ENCODE measurements at regions of chr19 and their contacts with region 1.

Region 1: GRCh38 chr19:40489882-40490230 is 23.1 kb downstream of the SPTBN4 start:
- DNase-seq: no peak
- ATAC-seq: no peak
- H3K4me3 Mint-ChIP-seq: no peak overlapping the region
- H3K27ac Mint-ChIP-seq: no peak overlapping the region
- H3K4me1 Mint-ChIP-seq: peaks cover 5% of the 10 kb centered on the region
- H3K27me3 Mint-ChIP-seq: peaks cover 67% of the 10 kb centered on the region
- CTCF ChIP-seq: no peak

Region 2: DNA sequence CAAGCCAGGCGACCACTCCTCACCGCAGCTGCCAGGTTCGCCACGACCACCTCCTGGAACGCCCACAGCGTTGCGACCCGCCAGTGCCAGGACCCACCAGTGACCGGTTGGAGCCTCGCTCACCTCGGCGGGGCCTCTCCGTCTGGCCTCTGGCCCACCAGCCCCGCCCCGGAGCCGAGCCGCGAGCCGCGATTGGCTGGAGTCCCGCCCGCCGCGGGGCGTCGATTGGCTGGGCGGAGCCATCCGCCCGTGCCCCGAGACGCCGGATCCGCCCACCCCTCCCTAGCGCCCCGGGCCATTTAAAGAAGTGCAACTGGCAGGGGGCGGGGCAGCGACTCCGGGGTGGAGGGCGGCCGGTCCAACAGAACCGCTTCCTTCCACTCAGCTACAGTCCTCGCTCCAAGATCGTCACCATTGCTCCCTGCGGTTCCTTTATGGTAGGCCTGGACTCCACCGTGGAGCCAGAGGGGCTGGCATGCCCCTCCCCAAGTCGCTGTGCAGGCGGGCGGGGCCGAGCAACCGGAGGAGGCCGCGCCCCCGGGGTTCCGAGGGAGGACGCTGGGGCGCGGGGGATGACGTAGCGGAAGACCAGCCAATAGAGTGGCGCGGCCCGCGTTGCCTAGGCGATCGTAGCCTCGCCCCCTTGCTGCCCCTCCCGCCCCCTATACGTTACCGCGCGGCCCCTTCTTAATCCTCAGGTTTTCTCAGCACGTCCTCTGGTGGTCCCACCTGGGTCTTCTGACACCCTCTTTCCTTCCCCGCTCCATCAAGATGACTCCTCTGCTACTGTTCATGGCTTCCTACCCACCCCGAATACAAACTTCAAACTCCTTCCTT is 45.4 kb before region 1 on chr19 and contains the start of gene SERTAD3:
- CTCF ChIA-PET with region 1: interaction called, 12 read pairs
- POLR2A ChIA-PET with region 1: interaction called, 6 read pairs
- DNase-seq: peak; percentile 97
- ATAC-seq: peak; percentile 68
- H3K4me3 Mint-ChIP-seq: peak within 1 kb of the TSS; percentile 94
- H3K27ac Mint-ChIP-seq: peak within 1 kb of the TSS; percentile 99
- H3K4me1 Mint-ChIP-seq: peaks cover 27% of the 10 kb centered on the region
- H3K27me3 Mint-ChIP-seq: no peaks in the 10 kb centered on the region
- CTCF ChIP-seq: no peak
- total RNA-seq, gene SERTAD3: 31.9 to 34.6 TPM (median 33.6 TPM) in 3 replicates

Region 3: DNA sequence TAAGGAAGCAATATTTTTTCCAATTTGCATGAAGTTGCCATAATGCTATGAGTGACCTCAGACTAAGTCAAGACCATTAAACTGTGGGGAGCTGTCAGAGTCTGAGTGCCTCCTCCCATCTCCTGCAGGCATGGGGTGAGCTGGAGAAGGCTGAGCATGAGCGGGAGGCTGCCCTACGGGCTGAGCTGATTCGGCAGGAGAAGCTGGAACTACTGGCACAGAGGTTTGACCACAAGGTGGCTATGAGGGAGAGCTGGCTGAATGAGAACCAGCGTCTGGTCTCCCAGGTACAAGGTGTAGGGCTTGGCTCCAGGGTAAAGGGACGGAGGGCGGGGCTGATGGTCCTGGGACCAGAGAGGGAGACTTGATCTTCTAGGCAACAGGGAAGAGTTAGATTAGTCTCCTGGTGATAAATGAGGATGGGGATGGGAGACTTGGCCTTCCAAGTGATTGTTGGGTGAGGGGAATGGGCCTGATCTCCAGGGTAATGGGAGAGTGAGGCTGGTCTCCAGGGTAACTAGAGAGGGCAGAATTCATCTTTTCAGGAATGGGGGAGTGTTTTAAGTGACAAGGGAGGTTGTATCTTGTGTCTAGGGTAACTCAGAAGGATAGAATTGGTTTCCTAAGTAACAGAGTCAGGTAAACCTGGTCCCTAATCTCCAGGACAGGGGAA is 12.9 kb after region 1 on chr19:
- CTCF ChIA-PET with region 1: interaction called, 20 read pairs
- POLR2A ChIA-PET with region 1: no interaction called
- DNase-seq: peak; percentile 51
- ATAC-seq: peak; percentile 96
- H3K4me3 Mint-ChIP-seq: no peak overlapping the region
- H3K27ac Mint-ChIP-seq: no peak overlapping the region
- H3K4me1 Mint-ChIP-seq: no peaks in the 10 kb centered on the region
- H3K27me3 Mint-ChIP-seq: peaks cover 59% of the 10 kb centered on the region
- CTCF ChIP-seq: no peak

Region 4: GRCh38 chr19:40512473-40513344 is 22.9 kb after region 1 on chr19:
- CTCF ChIA-PET with region 1: interaction called, 17 read pairs
- POLR2A ChIA-PET with region 1: no interaction called
- DNase-seq: peak; percentile 67
- ATAC-seq: peak; percentile 69
- H3K4me3 Mint-ChIP-seq: peak overlapping the region; percentile 56
- H3K27ac Mint-ChIP-seq: no peak overlapping the region
- H3K4me1 Mint-ChIP-seq: 0 out of 2 replicates have a peak, but pooled peaks cover 3% of the 10 kb centered on the region
- H3K27me3 Mint-ChIP-seq: peaks cover 94% of the 10 kb centered on the region
- CTCF ChIP-seq: no peak

Region 5: GRCh38 chr19:40523322-40524047 is 33.6 kb after region 1 on chr19:
- CTCF ChIA-PET with region 1: interaction called, 23 read pairs
- POLR2A ChIA-PET with region 1: interaction called, 3 read pairs
- DNase-seq: peak; percentile 87
- ATAC-seq: peak; percentile 91
- H3K4me3 Mint-ChIP-seq: no peak overlapping the region
- H3K27ac Mint-ChIP-seq: no peak overlapping the region
- H3K4me1 Mint-ChIP-seq: peaks cover 6% of the 10 kb centered on the region
- H3K27me3 Mint-ChIP-seq: peaks cover 65% of the 10 kb centered on the region
- CTCF ChIP-seq: peak; percentile 75

Measured in WTC11 (cell line).